CD4-positive, alpha-beta T cell (primary cell): ENCODE measurements at regions of chr5 and their contacts with region 1.

Region 1: GRCh38 chr5:151202381-151203139 is 21.3 kb downstream of the CCDC69 start:
- DNase-seq: peak in 6 of 14 experiments; percentile 4 to 76 (median 58)
- ATAC-seq: peak; percentile 74
- H3K4me3 ChIP-seq: no peak overlapping the region
- H3K4me3 Mint-ChIP-seq: peak overlapping the region; percentile 68
- H3K27ac ChIP-seq: peak overlapping the region; percentile 38 to 49
- H3K27ac Mint-ChIP-seq: peak overlapping the region; percentile 90
- H3K4me1 ChIP-seq: peaks cover 41% of the 10 kb centered on the region
- H3K4me1 Mint-ChIP-seq: peaks cover 56% of the 10 kb centered on the region
- H3K27me3 ChIP-seq: no peaks in the 10 kb centered on the region
- H3K27me3 Mint-ChIP-seq: no peaks in the 10 kb centered on the region
- CTCF ChIP-seq: no peak

Region 2: GRCh38 chr5:151144275-151144674 is 58.3 kb before region 1 on chr5:
- CTCF ChIA-PET with region 1: no interaction called
- POLR2A ChIA-PET with region 1: no interaction called
- intact Hi-C with region 1: no loop called
- DNase-seq: no peak
- ATAC-seq: no peak
- H3K4me3 ChIP-seq: no peak overlapping the region
- H3K4me3 Mint-ChIP-seq: peak overlapping the region; percentile 61
- H3K27ac ChIP-seq: peak overlapping the region; percentile 25 to 53
- H3K27ac Mint-ChIP-seq: peak overlapping the region; percentile 91
- H3K4me1 ChIP-seq: peaks cover 100% of the 10 kb centered on the region
- H3K4me1 Mint-ChIP-seq: peaks cover 94% of the 10 kb centered on the region
- H3K27me3 ChIP-seq: no peaks in the 10 kb centered on the region
- H3K27me3 Mint-ChIP-seq: no peaks in the 10 kb centered on the region
- CTCF ChIP-seq: no peak

Region 3: GRCh38 chr5:151213800-151214613 is 11.4 kb after region 1 on chr5:
- CTCF ChIA-PET with region 1: interaction called, 3 read pairs
- POLR2A ChIA-PET with region 1: interaction called, 31 read pairs
- intact Hi-C with region 1: no loop called
- DNase-seq: peak; percentile 66 to 94 (median 86)
- ATAC-seq: peak; percentile 81
- H3K4me3 ChIP-seq: peak overlapping the region; percentile 55
- H3K4me3 Mint-ChIP-seq: peak overlapping the region; percentile 89
- H3K27ac ChIP-seq: peak overlapping the region; percentile 92 to 97
- H3K27ac Mint-ChIP-seq: peak overlapping the region; percentile 94
- H3K4me1 ChIP-seq: peaks cover 99% of the 10 kb centered on the region
- H3K4me1 Mint-ChIP-seq: peaks cover 94% of the 10 kb centered on the region
- H3K27me3 ChIP-seq: no peaks in the 10 kb centered on the region
- H3K27me3 Mint-ChIP-seq: no peaks in the 10 kb centered on the region
- CTCF ChIP-seq: no peak